CD8-positive, alpha-beta memory T cell (primary cell): ENCODE measurements at regions of chr1 and their contacts with region 1.

Region 1: GRCh38 chr1:84506002-84506728 is at the starts of genes GNG5 and SPATA1:
- DNase-seq: peak; percentile 95 to 98 (median 96)
- H3K4me3 ChIP-seq: peak within 1 kb of the TSS; percentile 91
- H3K4me3 Mint-ChIP-seq: peak within 1 kb of the TSS; percentile 95 to 99 (median 97)
- H3K27ac ChIP-seq: peak within 1 kb of the TSS; percentile 77
- H3K27ac Mint-ChIP-seq: peak within 1 kb of the TSS; percentile 94 to 100 (median 97)
- H3K4me1 ChIP-seq: peaks cover 32% of the 10 kb centered on the region
- H3K4me1 Mint-ChIP-seq: peaks cover 45 to 54% (median 46%) of the 10 kb centered on the region in 3 donors
- H3K27me3 ChIP-seq: no peaks in the 10 kb centered on the region
- H3K27me3 Mint-ChIP-seq: no peaks in the 10 kb centered on the region
- total RNA-seq, gene GNG5: 123 to 128 TPM
- total RNA-seq, gene SPATA1: 0.55 to 0.69 TPM

Region 2: DNA sequence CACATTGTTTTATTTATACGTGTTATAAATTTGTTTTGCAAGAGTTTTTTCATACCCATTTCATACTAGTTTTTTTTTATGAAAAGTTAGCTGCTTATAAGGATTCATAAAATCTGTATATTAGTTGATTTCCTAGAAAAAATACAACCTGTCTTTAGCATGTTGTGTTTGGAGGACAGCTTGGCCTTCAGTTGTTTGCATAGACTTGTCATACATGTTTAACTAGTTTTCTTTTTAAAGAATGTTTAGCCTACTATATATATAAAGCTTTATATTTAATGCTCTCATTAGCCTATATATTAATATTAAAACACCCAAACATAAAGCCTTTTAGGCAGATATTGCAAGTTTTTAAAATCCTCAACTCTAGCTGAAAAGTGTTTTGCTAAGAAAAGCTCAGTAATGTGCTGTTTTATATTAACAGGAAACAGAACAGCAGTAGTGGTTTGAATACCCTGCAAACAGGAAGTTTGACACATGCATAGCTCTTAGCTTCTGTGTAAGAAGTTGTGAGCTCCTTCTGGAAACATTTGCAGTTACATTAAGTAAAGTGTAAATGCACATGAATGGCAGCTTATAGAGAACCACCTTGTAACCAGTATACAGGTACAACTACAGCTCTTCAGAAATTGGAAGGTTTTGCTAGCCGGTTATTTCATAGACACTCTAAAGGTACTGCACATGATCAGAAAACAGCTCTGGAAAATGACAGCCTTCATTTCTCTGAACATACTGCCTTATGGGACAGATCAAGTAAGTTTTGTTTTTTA is 362.2 kb before region 1 on chr1 and contains the start of gene PRKACB:
- CTCF ChIA-PET with region 1: interaction called, 11 read pairs
- POLR2A ChIA-PET with region 1: interaction called, 5 read pairs
- DNase-seq: peak in 3 of 5 donors; percentile 49 to 68 (median 52)
- H3K4me3 ChIP-seq: peak within 1 kb of the TSS; percentile 65
- H3K4me3 Mint-ChIP-seq: peak within 1 kb of the TSS; percentile 92 to 99 (median 95)
- H3K27ac ChIP-seq: peak within 1 kb of the TSS; percentile 52
- H3K27ac Mint-ChIP-seq: peak within 1 kb of the TSS; percentile 87 to 99 (median 96)
- H3K4me1 ChIP-seq: peaks cover 40% of the 10 kb centered on the region
- H3K4me1 Mint-ChIP-seq: peaks cover 35 to 62% (median 49%) of the 10 kb centered on the region in 3 donors
- H3K27me3 ChIP-seq: no peaks in the 10 kb centered on the region
- H3K27me3 Mint-ChIP-seq: no peaks in the 10 kb centered on the region
- total RNA-seq, gene PRKACB: 47.7 to 54.6 TPM

Region 3: GRCh38 chr1:84398175-84399155 is 107.7 kb before region 1 on chr1 and contains the start of gene DNASE2B:
- CTCF ChIA-PET with region 1: no interaction called
- POLR2A ChIA-PET with region 1: no interaction called
- DNase-seq: no peak
- H3K4me3 ChIP-seq: no peak within 1 kb of the TSS
- H3K4me3 Mint-ChIP-seq: no peak within 1 kb of the TSS
- H3K27ac ChIP-seq: no peak within 1 kb of the TSS
- H3K27ac Mint-ChIP-seq: no peak within 1 kb of the TSS
- H3K4me1 ChIP-seq: no peaks in the 10 kb centered on the region
- H3K4me1 Mint-ChIP-seq: no peaks in the 10 kb centered on the region
- H3K27me3 ChIP-seq: no peaks in the 10 kb centered on the region
- H3K27me3 Mint-ChIP-seq: no peaks in the 10 kb centered on the region
- total RNA-seq, gene DNASE2B: not detected

Region 4: GRCh38 chr1:84478876-84479868 is 27.0 kb before region 1 on chr1 and contains the start of gene RPF1:
- CTCF ChIA-PET with region 1: interaction called, 8 read pairs
- POLR2A ChIA-PET with region 1: interaction called, 13 read pairs
- DNase-seq: peak; percentile 68 to 89 (median 85)
- H3K4me3 ChIP-seq: peak within 1 kb of the TSS; percentile 54
- H3K4me3 Mint-ChIP-seq: peak within 1 kb of the TSS; percentile 98 to 100 (median 99)
- H3K27ac ChIP-seq: peak within 1 kb of the TSS; percentile 85
- H3K27ac Mint-ChIP-seq: peak within 1 kb of the TSS; percentile 97 to 100 (median 99)
- H3K4me1 ChIP-seq: peaks cover 35% of the 10 kb centered on the region
- H3K4me1 Mint-ChIP-seq: peaks cover 39 to 55% (median 47%) of the 10 kb centered on the region in 3 donors
- H3K27me3 ChIP-seq: no peaks in the 10 kb centered on the region
- H3K27me3 Mint-ChIP-seq: peaks cover 17 to 38% of the 10 kb centered on the region in 2 donors
- total RNA-seq, gene RPF1: 60.1 to 63.5 TPM

Region 5: DNA sequence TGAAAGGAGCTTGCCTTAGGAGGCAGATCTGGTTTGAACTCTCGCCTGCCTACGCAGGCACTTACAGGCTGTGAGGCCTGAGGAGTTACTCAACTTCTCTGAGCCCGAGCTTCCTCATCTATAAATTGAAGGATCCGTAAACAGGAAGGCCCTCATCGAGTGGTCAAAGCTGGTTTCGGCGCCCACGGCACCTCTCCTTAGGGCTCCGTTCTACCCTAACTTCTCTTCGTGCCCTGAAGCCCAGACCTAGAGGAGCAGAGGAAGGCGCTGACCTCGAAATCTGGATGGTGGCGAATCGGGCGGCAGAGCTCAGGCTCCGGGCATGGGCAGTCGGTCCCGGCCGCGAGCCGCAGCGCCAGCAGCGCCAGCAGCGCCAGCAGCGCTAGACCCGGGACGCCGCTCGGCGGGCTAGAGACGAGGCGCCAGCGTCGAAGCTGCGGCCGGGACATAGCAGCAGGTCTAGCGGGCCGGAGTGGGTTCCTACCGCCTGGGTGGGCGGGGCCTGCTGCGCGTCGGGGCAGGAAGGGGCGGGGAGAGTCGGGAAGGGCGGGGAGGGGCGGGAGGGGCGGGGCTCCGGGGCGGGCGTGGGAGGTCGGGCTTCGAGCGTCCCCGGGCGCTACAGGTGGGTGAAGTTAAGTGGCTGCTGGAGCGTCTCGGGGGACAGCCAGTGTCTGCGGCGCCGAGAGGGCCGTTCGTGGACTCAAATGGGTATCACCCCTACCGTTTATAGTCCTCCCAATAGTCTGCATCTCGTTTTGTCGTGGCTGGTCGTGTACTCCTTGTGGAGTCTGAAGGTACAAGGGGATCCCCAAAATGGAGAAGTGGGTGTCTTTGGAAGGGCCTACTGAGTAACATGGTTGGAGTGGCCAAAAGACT is 68.0 kb after region 1 on chr1 and contains the start of gene CTBS:
- CTCF ChIA-PET with region 1: interaction called, 8 read pairs
- POLR2A ChIA-PET with region 1: interaction called, 32 read pairs
- DNase-seq: peak; percentile 78 to 90 (median 84)
- H3K4me3 ChIP-seq: peak within 1 kb of the TSS; percentile 91
- H3K4me3 Mint-ChIP-seq: peak within 1 kb of the TSS; percentile 93 to 99 (median 97)
- H3K27ac ChIP-seq: peak within 1 kb of the TSS; percentile 97
- H3K27ac Mint-ChIP-seq: peak within 1 kb of the TSS; percentile 95 to 100 (median 99)
- H3K4me1 ChIP-seq: peaks cover 26% of the 10 kb centered on the region
- H3K4me1 Mint-ChIP-seq: peaks cover 39 to 48% (median 45%) of the 10 kb centered on the region in 3 donors
- H3K27me3 ChIP-seq: no peaks in the 10 kb centered on the region
- H3K27me3 Mint-ChIP-seq: no peaks in the 10 kb centered on the region
- total RNA-seq, gene CTBS: 8.8 to 9.1 TPM